ENCODE measurements at regions of chr10 and their contacts with region 1.

Region 1: DNA sequence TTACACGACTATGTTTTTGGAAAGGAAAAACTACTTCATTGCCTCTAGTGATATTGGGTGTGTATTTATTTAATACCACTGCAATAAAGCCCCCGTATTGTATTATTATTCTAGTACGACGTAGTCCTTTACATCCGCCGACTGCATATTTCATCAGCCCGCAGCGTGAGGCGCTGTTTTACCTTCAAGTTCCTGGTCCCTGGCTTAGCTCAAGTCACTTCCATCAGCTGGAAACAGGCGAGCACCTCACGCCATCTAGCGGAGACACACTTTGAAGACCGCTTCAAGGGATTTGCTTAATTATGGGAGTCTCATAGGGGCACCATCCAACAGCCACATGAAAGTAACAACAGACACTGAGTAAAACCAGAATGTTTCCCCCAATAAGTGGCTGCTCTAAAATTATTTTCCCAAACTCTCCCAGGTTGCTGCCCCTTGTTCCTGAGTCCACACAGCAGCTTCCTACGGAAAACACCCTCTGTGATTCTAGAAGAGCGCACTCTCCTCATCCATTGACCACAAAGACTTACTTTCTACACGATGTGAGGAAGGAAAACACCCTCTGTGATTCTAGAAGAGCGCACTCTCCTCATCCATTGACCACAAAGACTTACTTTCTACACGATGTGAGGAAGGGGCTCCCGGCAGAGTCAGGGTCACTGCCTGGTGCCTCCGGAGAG is 15.7 kb upstream of the ITIH2 start:
- H3K4me3 ChIP-seq: no peak overlapping the region
- H3K27ac ChIP-seq: no peak overlapping the region
- H3K4me1 ChIP-seq: no peaks in the 10 kb centered on the region
- CTCF ChIP-seq: peak; percentile 84

Region 2: GRCh38 chr10:7662522-7662921 is 24.8 kb before region 1 on chr10:
- CTCF ChIA-PET with region 1: interaction called, 15 read pairs
- POLR2A ChIA-PET with region 1: no interaction called
- H3K4me3 ChIP-seq: no peak overlapping the region
- H3K27ac ChIP-seq: no peak overlapping the region
- H3K4me1 ChIP-seq: no peaks in the 10 kb centered on the region
- CTCF ChIP-seq: no peak

Region 3: GRCh38 chr10:7671121-7671520 is 16.2 kb before region 1 on chr10:
- CTCF ChIA-PET with region 1: interaction called, 31 read pairs
- POLR2A ChIA-PET with region 1: no interaction called
- H3K4me3 ChIP-seq: no peak overlapping the region
- H3K27ac ChIP-seq: no peak overlapping the region
- H3K4me1 ChIP-seq: 0 out of 2 replicates have a peak, but pooled peaks cover 2% of the 10 kb centered on the region
- CTCF ChIP-seq: no peak

Region 4: GRCh38 chr10:7707102-7707501 is 19.7 kb after region 1 on chr10:
- CTCF ChIA-PET with region 1: interaction called, 10 read pairs
- POLR2A ChIA-PET with region 1: no interaction called
- H3K4me3 ChIP-seq: no peak overlapping the region
- H3K27ac ChIP-seq: no peak overlapping the region
- H3K4me1 ChIP-seq: no peaks in the 10 kb centered on the region
- CTCF ChIP-seq: no peak

Region 5: GRCh38 chr10:7773845-7774801 is 86.8 kb after region 1 on chr10:
- CTCF ChIA-PET with region 1: no interaction called
- POLR2A ChIA-PET with region 1: no interaction called
- H3K4me3 ChIP-seq: no peak overlapping the region
- H3K27ac ChIP-seq: no peak overlapping the region
- H3K4me1 ChIP-seq: no peaks in the 10 kb centered on the region
- CTCF ChIP-seq: no peak

Measured in HEK293 (cell line).